ENCODE measurements at regions of chr10 and their contacts with region 1.

Region 1: GRCh38 chr10:116787893-116788665 is 45.7 kb upstream of the HSPA12A start:
- DNase-seq: peak; percentile 95

Region 2: GRCh38 chr10:116683821-116684220 is 104.3 kb before region 1 on chr10:
- intact Hi-C with region 1: loop called (anchors 1 to 2 kb)
- DNase-seq: peak; percentile 53

Region 3: DNA sequence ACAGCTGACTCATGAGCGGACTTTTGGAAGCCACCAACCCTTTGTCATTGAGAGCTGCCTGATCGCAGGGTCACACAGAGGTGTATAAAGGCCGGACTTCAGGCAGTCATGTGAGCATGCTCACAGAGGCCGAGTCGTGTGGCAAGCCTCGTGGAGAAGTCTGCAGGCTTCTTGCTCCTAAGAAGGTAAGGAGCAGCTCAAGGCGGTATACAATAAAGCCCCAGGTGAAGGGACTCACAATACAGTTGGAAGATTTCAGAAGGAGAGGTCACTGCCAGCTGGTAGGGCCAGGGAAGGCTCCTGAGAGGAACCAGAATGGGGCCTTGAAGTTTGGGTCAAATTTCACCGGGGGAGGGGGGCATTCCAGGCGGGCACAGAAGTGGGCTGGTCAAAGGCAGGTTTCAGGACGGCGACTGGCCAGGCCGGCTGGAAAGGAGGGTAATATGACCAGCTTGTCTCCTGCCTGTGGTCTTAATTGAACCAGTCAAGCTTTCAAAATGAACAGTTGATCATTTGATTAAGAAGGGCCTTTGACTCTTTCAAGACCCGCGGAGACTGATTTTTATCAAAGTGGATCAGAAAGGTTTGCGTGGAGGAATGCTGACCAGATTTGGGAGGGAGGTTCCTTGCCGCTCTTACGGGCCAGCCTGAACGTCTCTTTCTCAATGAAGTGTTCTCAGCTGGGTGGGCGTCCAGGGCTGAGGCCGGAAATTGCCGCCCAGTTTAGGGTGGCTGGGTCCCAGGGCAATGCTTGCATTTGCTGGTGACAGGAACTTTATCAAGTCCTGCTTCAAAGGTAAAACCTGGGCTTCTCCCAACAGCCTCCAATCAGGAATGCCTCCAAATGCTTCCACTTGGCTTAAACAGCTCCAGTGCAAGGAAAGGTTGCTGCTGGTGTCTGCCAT is 933.1 kb after region 1 on chr10:
- intact Hi-C with region 1: no loop called
- DNase-seq: no peak

Region 4: GRCh38 chr10:118488710-118489497 is 1700.8 kb after region 1 on chr10:
- intact Hi-C with region 1: loop called in 1 of 2 experiments (anchors 5 kb)
- DNase-seq: no peak